B cell (primary cell): ENCODE measurements at regions of chr16 and their contacts with region 1.

Region 1: DNA sequence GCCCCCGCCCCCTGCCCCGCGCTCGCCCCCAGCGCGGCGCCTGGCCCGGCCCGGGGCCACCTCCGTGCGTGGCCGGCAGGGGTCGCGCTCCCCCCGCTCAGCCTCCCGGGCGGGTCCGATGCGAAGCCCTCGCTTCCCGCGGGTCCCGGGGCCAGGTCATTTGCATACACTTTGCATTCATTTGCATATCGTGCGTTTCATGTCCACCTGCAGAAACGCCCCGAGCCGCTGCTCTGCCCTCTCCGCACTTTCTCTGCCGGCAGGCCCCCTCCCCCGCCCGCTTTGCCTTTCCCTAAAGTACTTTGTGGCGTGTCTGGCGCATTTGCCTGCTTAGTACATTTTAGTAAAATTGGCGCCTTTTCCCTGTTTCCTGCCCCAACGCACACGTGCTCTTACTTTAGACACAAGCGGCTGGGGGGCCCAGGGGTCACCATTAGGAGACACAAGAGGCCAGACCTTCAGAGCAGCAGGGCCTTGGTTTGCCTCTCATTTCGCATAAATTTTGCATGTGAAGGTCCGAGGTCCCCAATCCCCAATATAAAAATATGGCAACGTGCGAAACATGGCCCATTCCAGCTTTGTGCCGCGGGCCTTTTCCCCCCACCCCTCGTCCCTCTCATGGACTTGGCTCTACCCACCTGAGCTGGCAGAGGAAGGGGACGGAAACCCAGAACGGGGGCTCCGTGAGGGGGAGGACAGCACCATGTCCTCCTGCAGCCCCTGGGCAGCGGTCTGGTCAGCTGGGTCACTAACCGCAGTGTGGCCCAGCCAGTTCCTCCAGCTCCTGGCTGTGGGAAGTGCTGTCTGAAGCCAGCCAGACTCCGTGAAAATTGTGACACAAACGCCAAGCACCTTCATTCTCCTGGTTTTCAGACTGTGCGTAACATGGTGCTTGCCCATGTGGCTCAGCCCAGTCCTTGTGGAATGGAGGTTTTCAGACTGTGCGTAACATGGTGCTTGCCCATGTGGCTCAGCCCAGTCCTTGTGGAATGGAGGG is 34.8 kb downstream of the CBFA2T3 start:
- DNase-seq: peak; percentile 85
- ATAC-seq: peak; percentile 67
- H3K4me3 ChIP-seq: peak overlapping the region in 4 of 5 experiments; percentile 22 to 46 (median 30)
- H3K4me3 Mint-ChIP-seq: peak overlapping the region; percentile 78
- H3K27ac ChIP-seq: no peak overlapping the region
- H3K27ac Mint-ChIP-seq: peak overlapping the region; percentile 81
- H3K4me1 ChIP-seq: peaks cover 29 to 39% of the 10 kb centered on the region in 2 donors
- H3K4me1 Mint-ChIP-seq: peaks cover 44% of the 10 kb centered on the region
- H3K27me3 ChIP-seq: no peaks in the 10 kb centered on the region
- H3K27me3 Mint-ChIP-seq: no peaks in the 10 kb centered on the region
- CTCF ChIP-seq: peak; percentile 86

Region 2: GRCh38 chr16:88754912-88755744 is 187.1 kb before region 1 on chr16:
- CTCF ChIA-PET with region 1: no interaction called
- POLR2A ChIA-PET with region 1: no interaction called
- intact Hi-C with region 1: no loop called
- DNase-seq: no peak
- ATAC-seq: no peak
- H3K4me3 ChIP-seq: no peak overlapping the region
- H3K4me3 Mint-ChIP-seq: no peak overlapping the region
- H3K27ac ChIP-seq: no peak overlapping the region
- H3K27ac Mint-ChIP-seq: no peak overlapping the region
- H3K4me1 ChIP-seq: peaks cover 0 to 16% of the 10 kb centered on the region in 2 donors
- H3K4me1 Mint-ChIP-seq: peaks cover 25% of the 10 kb centered on the region
- H3K27me3 ChIP-seq: no peaks in the 10 kb centered on the region
- H3K27me3 Mint-ChIP-seq: no peaks in the 10 kb centered on the region
- CTCF ChIP-seq: no peak

Region 3: DNA sequence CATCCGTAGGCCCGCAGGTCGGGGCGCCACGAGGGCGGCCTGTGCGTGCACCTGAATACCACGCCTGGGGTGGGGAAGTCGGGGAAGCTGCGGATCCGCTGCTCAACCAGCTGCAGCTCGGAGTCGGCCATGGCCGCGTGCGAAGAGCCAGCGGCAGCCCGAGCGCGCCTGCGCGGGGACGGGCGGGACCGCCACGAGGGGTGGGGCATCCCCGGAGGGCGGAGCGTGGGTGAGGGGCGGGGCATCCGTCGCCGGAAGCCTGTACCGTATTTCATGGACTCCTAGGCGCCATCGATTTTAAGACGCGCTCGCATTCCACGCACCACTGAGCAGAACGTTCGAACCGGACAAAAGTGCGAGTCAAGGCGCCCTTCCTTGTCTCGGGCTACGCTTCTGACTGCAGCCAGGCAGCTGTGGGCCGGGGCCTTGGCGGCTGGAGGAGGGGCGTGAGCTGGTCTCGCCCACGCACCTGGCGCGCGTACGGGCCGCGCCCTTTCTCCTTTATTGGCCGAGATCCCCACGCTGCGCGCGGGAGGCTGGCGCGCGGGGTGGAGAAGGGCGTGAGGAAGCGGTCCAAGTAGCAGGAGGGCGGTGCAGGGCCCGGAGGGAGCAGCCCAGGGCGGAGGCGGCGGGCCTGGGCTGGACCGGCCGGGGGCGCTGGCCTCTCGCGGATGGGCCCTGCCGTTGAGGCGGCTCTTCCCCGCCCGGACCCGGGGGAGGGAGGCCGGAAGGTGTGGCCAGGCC is 130.3 kb before region 1 on chr16 and contains the start of gene APRT:
- CTCF ChIA-PET with region 1: no interaction called
- POLR2A ChIA-PET with region 1: no interaction called
- intact Hi-C with region 1: loop called (anchors 2 kb)
- DNase-seq: peak; percentile 97
- ATAC-seq: peak; percentile 87
- H3K4me3 ChIP-seq: peak within 1 kb of the TSS; percentile 45 to 90 (median 77)
- H3K4me3 Mint-ChIP-seq: peak within 1 kb of the TSS; percentile 98
- H3K27ac ChIP-seq: peak within 1 kb of the TSS; percentile 61 to 65
- H3K27ac Mint-ChIP-seq: peak within 1 kb of the TSS; percentile 99
- H3K4me1 ChIP-seq: peaks cover 11 to 27% of the 10 kb centered on the region in 2 donors
- H3K4me1 Mint-ChIP-seq: peaks cover 19% of the 10 kb centered on the region
- H3K27me3 ChIP-seq: no peaks in the 10 kb centered on the region
- H3K27me3 Mint-ChIP-seq: no peaks in the 10 kb centered on the region
- CTCF ChIP-seq: no peak
- total RNA-seq, gene APRT: 111 and 124 TPM in 2 replicates

Region 4: DNA sequence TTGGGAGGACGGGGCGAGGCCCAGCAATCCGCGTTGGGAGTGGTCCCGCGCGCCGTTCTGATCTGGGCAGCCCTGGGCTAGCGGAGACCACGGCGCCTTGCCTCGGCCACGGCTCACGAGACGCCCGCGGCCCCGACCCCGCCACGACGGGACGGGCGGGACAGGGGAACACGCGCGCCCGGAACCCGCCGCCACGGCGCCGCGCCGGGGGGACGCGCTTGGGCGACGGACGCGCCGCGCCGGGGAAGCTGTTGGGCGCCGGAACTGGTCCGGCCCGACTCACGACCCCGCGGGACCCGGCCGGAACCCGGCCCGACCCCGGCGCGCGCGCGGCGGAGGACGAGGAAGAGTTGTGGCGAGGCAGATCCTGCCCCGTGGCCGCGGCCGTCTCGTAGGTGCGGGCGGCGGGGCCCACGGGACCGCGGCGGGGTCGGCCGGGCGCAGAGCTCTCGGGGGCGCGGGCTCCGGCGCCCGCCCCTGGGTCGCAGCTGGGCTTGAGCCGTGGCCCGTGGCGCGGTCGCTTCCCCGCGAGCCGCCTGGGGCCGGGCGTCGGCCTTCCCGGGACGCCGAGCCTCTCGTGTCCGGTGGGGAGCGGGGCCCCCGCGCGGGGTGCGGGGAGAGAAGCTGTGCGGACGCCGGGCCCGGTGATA is 151.5 kb after region 1 on chr16 and contains the start of gene ACSF3:
- CTCF ChIA-PET with region 1: interaction called, 8 read pairs
- POLR2A ChIA-PET with region 1: no interaction called
- intact Hi-C with region 1: loop called (anchors 2 kb)
- DNase-seq: peak; percentile 83
- ATAC-seq: peak; percentile 61
- H3K4me3 ChIP-seq: peak within 1 kb of the TSS; percentile 55 to 84 (median 68)
- H3K4me3 Mint-ChIP-seq: peak within 1 kb of the TSS; percentile 92
- H3K27ac ChIP-seq: peak within 1 kb of the TSS; percentile 29 to 74
- H3K27ac Mint-ChIP-seq: peak within 1 kb of the TSS; percentile 92
- H3K4me1 ChIP-seq: peaks cover 43 to 53% of the 10 kb centered on the region in 2 donors
- H3K4me1 Mint-ChIP-seq: peaks cover 49% of the 10 kb centered on the region
- H3K27me3 ChIP-seq: peaks cover 0 to 11% (median 4%) of the 10 kb centered on the region in 4 experiments
- H3K27me3 Mint-ChIP-seq: peaks cover 23% of the 10 kb centered on the region
- CTCF ChIP-seq: no peak
- total RNA-seq, gene ACSF3: 113 and 115 TPM in 2 replicates